ENCODE measurements at regions of chr15 and their contacts with region 1.

Region 1: GRCh38 chr15:98387866-98388265 is 260.5 kb upstream of the IGF1R start:
- DNase-seq: no peak
- ATAC-seq: no peak
- H3K4me3 ChIP-seq: no peak overlapping the region
- H3K27ac ChIP-seq: no peak overlapping the region
- H3K4me1 ChIP-seq: no peaks in the 10 kb centered on the region
- H3K27me3 ChIP-seq: no peaks in the 10 kb centered on the region

Region 2: DNA sequence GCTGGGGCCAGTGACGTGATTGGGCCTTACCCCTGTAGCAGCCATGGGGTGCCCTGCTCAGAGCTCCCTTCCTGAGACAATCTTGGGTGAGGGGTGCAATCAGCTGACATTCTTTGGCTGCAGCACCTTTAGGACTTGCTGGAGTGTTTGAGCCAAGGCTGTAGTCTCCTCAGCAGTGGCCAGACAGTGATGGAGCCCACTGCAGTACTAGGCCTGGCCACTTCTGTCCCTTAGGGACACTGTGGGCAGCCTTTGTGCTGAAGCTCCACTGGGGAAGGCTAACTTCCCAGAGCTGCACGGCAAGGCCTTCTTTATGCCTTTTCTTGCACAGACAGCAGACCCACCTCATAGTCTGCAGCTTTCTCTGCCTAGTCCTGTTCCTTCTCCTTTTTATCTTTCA is 24.4 kb before region 1 on chr15:
- intact Hi-C with region 1: loop called in 1 of 4 experiments (anchors 2 kb)
- DNase-seq: no peak
- ATAC-seq: peak; percentile 42 to 51
- H3K4me3 ChIP-seq: no peak overlapping the region
- H3K27ac ChIP-seq: no peak overlapping the region
- H3K4me1 ChIP-seq: no peaks in the 10 kb centered on the region
- H3K27me3 ChIP-seq: no peaks in the 10 kb centered on the region

Region 3: GRCh38 chr15:98776607-98777315 is 388.9 kb after region 1 on chr15:
- intact Hi-C with region 1: no loop called
- DNase-seq: peak; percentile 44 to 78 (median 75)
- ATAC-seq: peak; percentile 41 to 43
- H3K4me3 ChIP-seq: no peak overlapping the region
- H3K27ac ChIP-seq: peak overlapping the region; percentile 57
- H3K4me1 ChIP-seq: peaks cover 7% of the 10 kb centered on the region
- H3K27me3 ChIP-seq: no peaks in the 10 kb centered on the region